AG04449 (cell line): ENCODE measurements at regions of chr5 and their contacts with region 1.

Region 1: DNA sequence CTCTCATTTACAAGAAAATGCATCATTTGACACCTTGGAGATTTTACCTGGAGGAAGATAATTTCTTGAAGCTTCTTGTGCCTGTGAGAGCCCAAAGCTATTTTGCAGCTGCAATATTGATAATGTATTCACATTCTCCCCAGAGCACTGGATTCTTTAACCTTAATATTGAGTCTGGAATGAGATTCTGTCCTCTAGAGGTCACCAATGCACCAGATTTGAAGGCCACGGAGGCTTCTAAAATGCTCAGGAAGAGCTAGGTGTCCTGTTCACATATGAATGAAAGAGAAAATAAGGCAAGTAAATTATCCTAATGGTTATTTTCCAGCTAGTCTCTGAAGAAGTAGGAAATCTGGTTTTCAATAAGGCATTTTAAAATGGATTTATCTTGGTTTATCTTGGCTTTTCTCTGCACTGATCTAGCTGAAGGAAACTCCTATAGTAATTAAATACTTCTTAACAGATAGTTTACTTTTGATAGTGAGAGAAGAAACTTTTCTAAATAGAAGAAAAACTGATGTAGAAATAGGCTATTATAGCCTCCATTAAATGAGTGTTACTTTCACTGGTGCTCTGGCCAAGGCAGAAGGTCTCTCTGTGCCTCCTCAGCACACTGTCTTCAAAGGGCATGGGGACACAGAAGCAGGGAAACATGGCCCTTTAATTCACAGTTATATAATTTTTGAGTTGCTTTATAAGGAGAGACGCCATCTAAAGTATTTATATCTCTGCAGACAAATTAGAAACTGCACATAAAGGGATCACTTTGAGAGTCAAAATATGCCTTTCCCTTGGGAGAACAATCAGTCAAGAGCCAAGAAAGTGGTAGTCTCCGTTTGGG is 297.0 kb upstream of the ACTBL2 start:
- DNase-seq: peak; percentile 23
- H3K4me3 ChIP-seq: no peak overlapping the region
- CTCF ChIP-seq: peak; percentile 62

Region 2: DNA sequence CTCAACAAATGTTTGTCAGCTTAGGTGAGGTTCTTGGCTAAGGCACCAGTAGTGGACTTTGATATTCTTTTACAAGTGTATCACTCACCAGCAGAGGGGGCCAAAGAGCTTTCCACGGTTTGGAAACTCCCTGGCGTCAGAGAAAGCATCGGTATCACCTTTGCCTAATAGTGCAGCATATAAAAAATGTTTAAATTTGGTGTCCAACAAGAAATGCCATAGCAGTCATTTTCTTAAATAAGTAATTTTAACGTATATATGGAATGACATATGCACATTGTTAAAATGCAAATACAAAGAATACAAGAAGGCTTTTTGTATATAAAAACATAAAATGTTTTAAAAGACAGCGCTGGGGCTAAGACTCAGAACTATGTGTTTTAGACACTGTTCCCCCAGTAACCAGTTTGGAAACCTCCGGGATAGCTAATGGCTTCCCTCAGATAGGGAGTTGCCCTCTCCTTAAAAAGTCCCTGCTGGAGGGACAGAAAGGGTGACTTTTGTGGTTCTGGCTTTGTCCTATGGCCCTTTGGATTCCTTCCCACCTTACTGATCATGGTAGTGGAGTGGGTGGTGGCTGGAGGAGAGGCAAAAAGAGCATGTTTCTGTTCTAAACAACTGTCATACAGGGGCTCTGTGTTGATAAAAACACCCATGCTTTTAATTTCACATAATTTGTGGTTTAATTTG is 481.2 kb before region 1 on chr5:
- CTCF ChIA-PET with region 1: interaction called, 84 read pairs
- POLR2A ChIA-PET with region 1: no interaction called
- DNase-seq: peak; percentile 24
- H3K4me3 ChIP-seq: no peak overlapping the region
- CTCF ChIP-seq: peak; percentile 63

Region 3: DNA sequence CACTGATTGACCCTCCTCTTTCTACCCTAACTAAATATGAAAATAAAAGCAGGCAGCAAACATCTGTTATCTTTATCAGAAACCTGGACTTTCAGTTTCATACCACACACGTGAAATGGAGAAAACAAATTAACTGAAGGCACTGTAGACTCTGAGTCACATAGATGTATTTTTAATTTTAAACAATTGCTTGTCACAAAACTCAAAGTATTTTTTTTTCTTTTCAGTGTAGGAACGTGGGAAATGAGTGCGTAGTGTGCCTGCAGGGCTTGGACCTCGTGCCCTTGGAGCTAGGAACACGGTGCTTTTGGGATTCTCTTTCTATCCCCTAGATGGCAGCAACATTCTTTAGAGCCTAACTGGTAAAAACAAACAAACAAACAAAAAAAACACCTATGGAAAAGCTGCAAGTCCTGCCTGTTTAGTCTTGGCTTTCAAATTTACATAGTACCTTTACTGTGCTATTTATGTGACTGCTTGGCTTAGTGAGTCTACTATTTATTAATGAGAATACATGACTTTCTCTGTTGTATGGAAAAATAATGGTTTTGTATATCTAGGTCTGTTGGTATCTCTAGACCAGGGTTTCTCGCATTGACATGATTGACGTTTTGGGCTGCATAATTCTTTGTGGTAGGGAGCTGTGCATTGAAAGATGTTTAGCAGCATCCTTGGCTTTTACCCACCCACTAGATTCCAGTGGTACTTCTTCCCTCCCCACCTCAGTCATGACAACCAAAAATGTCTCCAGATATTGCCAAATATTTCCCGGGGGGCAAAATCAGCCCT is 280.1 kb before region 1 on chr5:
- CTCF ChIA-PET with region 1: interaction called, 112 read pairs
- POLR2A ChIA-PET with region 1: no interaction called
- DNase-seq: no peak
- H3K4me3 ChIP-seq: no peak overlapping the region
- CTCF ChIP-seq: peak; percentile 61

Region 4: GRCh38 chr5:57839025-57839424 is 59.4 kb after region 1 on chr5:
- CTCF ChIA-PET with region 1: interaction called, 14 read pairs
- POLR2A ChIA-PET with region 1: no interaction called
- DNase-seq: no peak
- H3K4me3 ChIP-seq: no peak overlapping the region
- CTCF ChIP-seq: no peak

Region 5: DNA sequence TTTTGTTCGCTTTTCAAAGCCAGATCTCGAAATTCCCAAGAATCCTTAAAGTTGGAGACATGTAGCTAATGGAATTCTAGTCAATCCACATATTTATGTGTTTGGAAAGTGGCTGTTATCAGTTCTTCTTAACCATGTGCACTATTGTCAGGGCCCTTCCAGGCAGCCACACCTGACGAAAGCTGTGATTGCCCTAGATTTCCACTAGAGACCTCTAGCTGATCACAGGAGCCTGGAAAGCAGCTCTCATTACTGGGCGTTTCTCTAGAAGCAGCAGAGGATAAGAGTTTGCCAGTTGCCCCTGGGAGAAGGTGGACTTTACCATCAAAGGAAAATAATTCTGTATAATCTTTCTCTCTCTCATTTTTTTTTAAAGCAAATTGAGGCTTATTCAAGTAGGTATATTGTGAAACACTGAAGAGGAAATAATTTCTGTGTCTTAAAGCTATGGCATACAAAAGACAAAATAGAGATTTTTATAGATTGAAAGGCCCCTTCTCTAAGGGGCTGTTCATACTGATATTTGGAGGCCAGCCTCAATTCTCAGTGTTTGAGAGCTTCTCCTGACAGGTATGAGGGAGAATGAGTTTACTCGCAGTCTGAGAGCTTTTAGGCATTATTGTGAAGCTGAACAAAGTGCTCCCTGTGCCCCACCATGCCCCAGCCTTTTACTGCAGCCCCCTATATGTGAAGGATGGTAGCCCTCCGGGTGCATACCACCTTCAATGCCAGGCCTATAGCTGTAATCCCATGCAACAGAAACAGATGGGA is 108.4 kb after region 1 on chr5:
- CTCF ChIA-PET with region 1: interaction called, 38 read pairs
- POLR2A ChIA-PET with region 1: interaction called, 4 read pairs
- DNase-seq: no peak
- H3K4me3 ChIP-seq: no peak overlapping the region
- CTCF ChIP-seq: peak; percentile 60

Region 6: GRCh38 chr5:58025809-58026208 is 246.2 kb after region 1 on chr5:
- CTCF ChIA-PET with region 1: no interaction called
- POLR2A ChIA-PET with region 1: no interaction called
- DNase-seq: no peak
- H3K4me3 ChIP-seq: no peak overlapping the region
- CTCF ChIP-seq: no peak

Region 7: DNA sequence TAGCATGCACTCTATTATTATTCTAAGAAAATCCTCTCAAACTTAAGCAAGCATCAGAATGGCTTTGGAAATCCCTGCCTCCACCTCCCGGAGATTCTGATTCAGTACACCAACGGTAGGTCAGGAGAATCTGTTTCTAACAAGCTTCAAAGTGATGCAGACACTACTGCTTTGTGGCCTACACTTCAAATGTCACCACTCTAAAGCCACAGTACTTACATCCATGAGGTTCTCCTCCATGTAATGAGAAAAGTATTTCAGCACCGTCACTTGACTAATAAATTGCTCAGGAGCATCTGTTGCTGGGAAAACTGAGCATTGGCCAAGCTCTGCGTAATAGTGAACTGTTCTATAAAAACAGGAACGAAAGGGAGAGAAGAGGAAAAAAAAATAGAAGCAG is 675.5 kb after region 1 on chr5:
- CTCF ChIA-PET with region 1: interaction called, 283 read pairs
- POLR2A ChIA-PET with region 1: interaction called, 25 read pairs
- DNase-seq: no peak
- H3K4me3 ChIP-seq: peak overlapping the region; percentile 88
- CTCF ChIP-seq: no peak